Calu3 (cell line): ENCODE measurements at regions of chr12 and their contacts with region 1.

Region 1: GRCh38 chr12:105330283-105330930 is at the start of gene C12orf75:
- DNase-seq: peak; percentile 95
- H3K4me3 Mint-ChIP-seq: peak within 1 kb of the TSS; percentile 78
- H3K27ac Mint-ChIP-seq: peak within 1 kb of the TSS; percentile 92
- H3K4me1 Mint-ChIP-seq: peaks cover 74% of the 10 kb centered on the region
- H3K27me3 Mint-ChIP-seq: no peaks in the 10 kb centered on the region
- CTCF ChIP-seq: no peak
- total RNA-seq, gene C12orf75: 336 and 363 TPM in 2 replicates

Region 2: GRCh38 chr12:105235732-105236476 is 94.5 kb before region 1 on chr12 and contains the start of gene APPL2:
- CTCF ChIA-PET with region 1: interaction called, 3 read pairs
- intact Hi-C with region 1: loop called (anchors 2 kb)
- DNase-seq: peak; percentile 92
- H3K4me3 Mint-ChIP-seq: peak within 1 kb of the TSS; percentile 80
- H3K27ac Mint-ChIP-seq: peak within 1 kb of the TSS; percentile 72
- H3K4me1 Mint-ChIP-seq: peaks cover 33% of the 10 kb centered on the region
- H3K27me3 Mint-ChIP-seq: no peaks in the 10 kb centered on the region
- CTCF ChIP-seq: peak; percentile 79
- total RNA-seq, gene APPL2: 35.9 and 45.8 TPM in 2 replicates

Region 3: DNA sequence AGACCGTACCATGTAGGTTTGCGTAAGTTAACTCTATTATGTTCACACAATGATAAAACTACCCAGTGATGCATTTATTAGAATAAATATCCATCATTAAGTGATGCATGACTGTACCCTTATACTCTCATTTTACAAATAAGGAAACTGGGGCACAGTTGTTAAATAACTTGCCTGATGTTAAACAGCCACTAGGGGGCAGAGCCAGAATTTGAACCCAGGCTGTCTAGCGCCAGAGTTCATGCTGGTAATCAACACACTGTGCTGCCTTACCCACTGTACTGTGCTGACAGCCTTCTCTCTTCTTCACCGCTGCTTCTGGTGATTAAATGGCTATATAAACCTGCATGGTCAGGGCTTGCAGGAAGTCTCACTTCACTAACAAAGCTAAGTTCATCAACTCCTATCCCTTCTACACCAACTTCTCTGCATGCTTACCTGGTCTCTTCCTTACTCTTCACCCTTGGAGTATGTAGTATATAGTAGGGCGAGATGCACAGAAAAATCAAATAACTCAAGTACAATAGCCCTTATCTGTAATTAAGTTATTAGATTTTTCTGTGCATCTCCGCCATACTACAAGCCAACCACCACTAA is 50.8 kb before region 1 on chr12:
- CTCF ChIA-PET with region 1: no interaction called
- intact Hi-C with region 1: loop called (anchors 1 kb)
- DNase-seq: peak; percentile 48
- H3K4me3 Mint-ChIP-seq: no peak overlapping the region
- H3K27ac Mint-ChIP-seq: no peak overlapping the region
- H3K4me1 Mint-ChIP-seq: peaks cover 47% of the 10 kb centered on the region
- H3K27me3 Mint-ChIP-seq: no peaks in the 10 kb centered on the region
- CTCF ChIP-seq: peak; percentile 69

Region 4: GRCh38 chr12:105296116-105297089 is 34.0 kb before region 1 on chr12:
- CTCF ChIA-PET with region 1: no interaction called
- intact Hi-C with region 1: no loop called
- DNase-seq: no peak
- H3K4me3 Mint-ChIP-seq: no peak overlapping the region
- H3K27ac Mint-ChIP-seq: no peak overlapping the region
- H3K4me1 Mint-ChIP-seq: peaks cover 21% of the 10 kb centered on the region
- H3K27me3 Mint-ChIP-seq: no peaks in the 10 kb centered on the region
- CTCF ChIP-seq: no peak

Region 5: DNA sequence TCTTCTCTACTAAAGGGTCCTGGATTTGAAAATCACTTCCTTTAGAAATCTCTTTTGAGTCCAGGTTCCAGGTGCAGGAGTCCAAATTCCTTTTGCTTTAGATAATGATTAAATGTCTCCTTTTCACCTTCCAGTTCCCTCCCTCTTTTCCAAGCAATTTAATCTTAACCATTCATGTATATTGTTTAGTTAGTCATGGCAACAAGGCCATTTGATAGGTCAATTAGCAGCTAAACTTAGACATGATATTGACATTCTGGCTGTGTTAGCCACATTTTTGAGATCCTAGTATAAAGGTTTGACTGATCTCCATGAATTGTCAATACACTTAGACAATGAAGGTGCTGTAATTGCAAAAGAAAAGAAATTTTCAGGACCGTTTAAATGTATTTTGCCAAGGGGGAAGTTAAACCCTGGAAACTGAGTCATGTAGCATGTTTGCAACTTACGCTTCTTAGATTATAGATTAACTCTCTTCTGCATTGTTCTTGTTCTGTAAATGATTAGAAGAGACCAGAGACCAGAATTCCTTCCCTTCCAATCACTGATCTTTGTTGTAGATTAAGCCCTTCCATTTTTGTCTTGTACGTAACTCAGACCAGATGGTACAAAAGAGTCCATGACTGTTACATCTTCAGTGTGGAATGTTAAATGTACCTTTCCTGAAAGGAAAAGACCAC is 12.3 kb before region 1 on chr12:
- CTCF ChIA-PET with region 1: interaction called, 11 read pairs
- intact Hi-C with region 1: loop called (anchors 1 kb)
- DNase-seq: peak; percentile 40
- H3K4me3 Mint-ChIP-seq: peak overlapping the region; percentile 3
- H3K27ac Mint-ChIP-seq: peak overlapping the region; percentile 86
- H3K4me1 Mint-ChIP-seq: peaks cover 68% of the 10 kb centered on the region
- H3K27me3 Mint-ChIP-seq: no peaks in the 10 kb centered on the region
- CTCF ChIP-seq: no peak

Region 6: GRCh38 chr12:105347499-105347898 is 17.1 kb after region 1 on chr12:
- CTCF ChIA-PET with region 1: interaction called, 4 read pairs
- intact Hi-C with region 1: loop called (anchors 2 kb)
- DNase-seq: no peak
- H3K4me3 Mint-ChIP-seq: no peak overlapping the region
- H3K27ac Mint-ChIP-seq: no peak overlapping the region
- H3K4me1 Mint-ChIP-seq: peaks cover 32% of the 10 kb centered on the region
- H3K27me3 Mint-ChIP-seq: no peaks in the 10 kb centered on the region
- CTCF ChIP-seq: no peak

Region 7: GRCh38 chr12:105369014-105369413 is 38.6 kb after region 1 on chr12:
- CTCF ChIA-PET with region 1: no interaction called
- intact Hi-C with region 1: loop called (anchors 5 kb)
- DNase-seq: no peak
- H3K4me3 Mint-ChIP-seq: no peak overlapping the region
- H3K27ac Mint-ChIP-seq: no peak overlapping the region
- H3K4me1 Mint-ChIP-seq: no peaks in the 10 kb centered on the region
- H3K27me3 Mint-ChIP-seq: no peaks in the 10 kb centered on the region
- CTCF ChIP-seq: no peak

Region 8: DNA sequence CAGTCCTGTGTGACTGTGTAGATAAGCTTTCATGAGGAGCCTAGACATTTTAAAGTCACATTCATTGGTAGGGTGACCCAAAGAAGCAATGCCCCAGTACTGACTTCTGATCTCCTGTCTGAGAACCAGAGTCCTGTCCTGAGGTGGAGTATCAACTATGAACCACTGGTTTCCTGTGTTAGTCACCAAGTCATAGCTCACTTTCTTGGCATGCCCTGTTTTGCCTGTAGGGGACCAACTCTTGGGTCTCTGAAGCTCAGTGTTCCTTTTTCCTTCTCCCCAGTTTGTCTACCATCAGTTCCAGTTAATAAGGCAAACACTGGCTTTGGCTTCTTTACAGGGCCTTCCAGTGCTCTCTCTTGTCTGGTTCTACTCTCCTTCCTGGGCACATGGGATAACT is 97.5 kb after region 1 on chr12:
- CTCF ChIA-PET with region 1: no interaction called
- intact Hi-C with region 1: no loop called
- DNase-seq: no peak
- H3K4me3 Mint-ChIP-seq: no peak overlapping the region
- H3K27ac Mint-ChIP-seq: no peak overlapping the region
- H3K4me1 Mint-ChIP-seq: peaks cover 14% of the 10 kb centered on the region
- H3K27me3 Mint-ChIP-seq: no peaks in the 10 kb centered on the region
- CTCF ChIP-seq: peak; percentile 15

Region 9: GRCh38 chr12:105562199-105562971 is 232.0 kb after region 1 on chr12:
- CTCF ChIA-PET with region 1: no interaction called
- intact Hi-C with region 1: no loop called
- DNase-seq: peak; percentile 74
- H3K4me3 Mint-ChIP-seq: peak overlapping the region; percentile 52
- H3K27ac Mint-ChIP-seq: peak overlapping the region; percentile 70
- H3K4me1 Mint-ChIP-seq: peaks cover 27% of the 10 kb centered on the region
- H3K27me3 Mint-ChIP-seq: peaks cover 9% of the 10 kb centered on the region
- CTCF ChIP-seq: no peak